ENCODE measurements at regions of chr1 and their contacts with region 1.

Region 1: DNA sequence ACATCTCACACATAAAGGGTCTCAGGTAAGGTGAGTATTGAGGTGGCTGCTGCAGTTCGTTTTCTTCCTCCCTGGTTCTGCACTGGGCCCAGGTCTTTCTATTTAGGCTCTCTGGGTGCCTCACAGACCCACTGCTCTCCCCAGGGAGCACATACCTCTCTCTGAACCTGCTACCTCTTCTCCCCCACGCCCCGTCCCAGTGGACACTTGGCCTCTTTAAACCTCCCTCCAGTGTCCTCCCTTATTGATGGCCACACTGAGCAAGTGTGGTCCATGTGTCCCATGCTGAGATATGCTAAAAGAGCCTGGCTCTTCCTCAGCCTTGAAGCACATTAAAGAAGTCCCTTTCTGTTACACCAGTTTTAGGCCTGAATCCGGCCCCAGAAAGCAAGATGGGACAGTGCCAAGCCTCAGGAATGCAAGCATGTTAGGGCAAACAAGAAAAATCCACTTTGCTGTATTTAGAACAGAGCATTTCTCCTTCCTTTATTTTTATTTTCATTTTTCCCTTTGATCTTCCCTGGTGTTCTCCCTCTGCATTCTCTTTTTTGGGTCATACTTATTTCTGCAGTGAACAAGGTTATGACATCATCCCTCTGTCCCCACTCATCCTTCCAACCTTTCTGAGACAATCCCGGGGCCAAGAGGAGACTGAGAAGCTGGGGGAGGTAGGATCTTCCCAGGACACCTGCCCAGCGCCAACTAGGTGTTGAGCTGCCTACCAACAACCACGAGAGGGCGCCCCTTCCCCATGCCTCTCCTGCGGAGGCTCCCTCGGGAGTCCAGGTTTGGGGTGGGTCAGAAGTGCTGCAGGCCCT is 5.0 kb upstream of the CHI3L2 start:
- DNase-seq: peak; percentile 81
- ATAC-seq: peak; percentile 57
- H3K4me3 ChIP-seq: peak overlapping the region; percentile 23; the same call in 1 of the 2 replicates
- H3K27ac ChIP-seq: peak overlapping the region; percentile 100
- H3K4me1 ChIP-seq: peaks cover 88% of the 10 kb centered on the region
- H3K27me3 ChIP-seq: no peaks in the 10 kb centered on the region
- CTCF ChIP-seq: peak; percentile 96 to 97 (median 96); a peak in 5 of 6 replicates
- EP300 ChIP-seq: no peak
- POLR2A ChIP-seq: no peak
- RAD21 ChIP-seq: peak; percentile 99

Region 2: GRCh38 chr1:110787328-110788071 is 435.0 kb before region 1 on chr1:
- CTCF ChIA-PET with region 1: no interaction called
- POLR2A ChIA-PET with region 1: no interaction called
- RAD21 ChIA-PET with region 1: no interaction called
- SMC1A ChIA-PET with region 1: interaction called, 3 read pairs
- in situ Hi-C with region 1: no loop called
- intact Hi-C with region 1: loop called (anchors 1 kb)
- DNase-seq: peak; percentile 76
- ATAC-seq: peak; percentile 83
- H3K4me3 ChIP-seq: no peak overlapping the region
- H3K27ac ChIP-seq: peak overlapping the region; percentile 98
- H3K4me1 ChIP-seq: peaks cover 29% of the 10 kb centered on the region
- H3K27me3 ChIP-seq: no peaks in the 10 kb centered on the region
- CTCF ChIP-seq: no peak
- EP300 ChIP-seq: no peak
- POLR2A ChIP-seq: no peak
- RAD21 ChIP-seq: no peak

Region 3: DNA sequence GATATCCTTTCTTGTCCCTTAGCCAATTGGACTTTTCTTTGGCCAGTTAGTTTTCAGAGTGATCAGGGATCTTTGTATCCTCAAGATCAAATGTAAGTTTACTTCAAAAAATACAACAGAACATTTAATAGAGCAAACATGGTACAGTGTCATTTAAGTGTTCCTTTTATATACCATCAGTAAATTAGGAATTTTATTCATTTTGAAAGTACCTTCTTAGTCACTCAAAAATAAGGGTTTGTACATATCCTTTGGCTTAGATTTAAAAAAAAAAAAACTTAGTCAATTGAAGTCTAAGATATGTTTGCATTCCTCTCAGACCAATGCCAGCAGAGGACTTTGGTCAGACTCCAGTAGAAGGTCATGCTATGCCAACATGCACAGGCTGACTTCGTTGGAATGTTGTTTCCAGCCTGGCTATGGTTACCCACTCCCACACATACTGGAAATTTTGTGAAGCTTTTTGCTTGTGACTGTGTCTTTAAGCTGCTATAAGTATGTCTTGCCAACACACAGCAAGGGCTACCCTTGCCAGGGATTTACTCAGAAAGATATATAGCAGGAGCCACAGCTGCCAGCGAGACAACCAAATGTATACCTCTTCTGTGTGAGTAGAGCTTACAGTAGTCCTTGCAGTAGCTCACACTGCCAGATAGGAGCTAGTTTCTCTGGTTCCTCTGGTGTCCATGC is 177.3 kb before region 1 on chr1:
- CTCF ChIA-PET with region 1: no interaction called
- POLR2A ChIA-PET with region 1: no interaction called
- RAD21 ChIA-PET with region 1: interaction called, 12 read pairs
- SMC1A ChIA-PET with region 1: interaction called, 4 read pairs
- in situ Hi-C with region 1: no loop called
- intact Hi-C with region 1: no loop called
- DNase-seq: no peak
- ATAC-seq: peak; percentile 72
- H3K4me3 ChIP-seq: no peak overlapping the region
- H3K27ac ChIP-seq: no peak overlapping the region
- H3K4me1 ChIP-seq: peaks cover 5% of the 10 kb centered on the region
- H3K27me3 ChIP-seq: no peaks in the 10 kb centered on the region
- CTCF ChIP-seq: no peak
- EP300 ChIP-seq: no peak
- POLR2A ChIP-seq: no peak
- RAD21 ChIP-seq: no peak

Region 4: DNA sequence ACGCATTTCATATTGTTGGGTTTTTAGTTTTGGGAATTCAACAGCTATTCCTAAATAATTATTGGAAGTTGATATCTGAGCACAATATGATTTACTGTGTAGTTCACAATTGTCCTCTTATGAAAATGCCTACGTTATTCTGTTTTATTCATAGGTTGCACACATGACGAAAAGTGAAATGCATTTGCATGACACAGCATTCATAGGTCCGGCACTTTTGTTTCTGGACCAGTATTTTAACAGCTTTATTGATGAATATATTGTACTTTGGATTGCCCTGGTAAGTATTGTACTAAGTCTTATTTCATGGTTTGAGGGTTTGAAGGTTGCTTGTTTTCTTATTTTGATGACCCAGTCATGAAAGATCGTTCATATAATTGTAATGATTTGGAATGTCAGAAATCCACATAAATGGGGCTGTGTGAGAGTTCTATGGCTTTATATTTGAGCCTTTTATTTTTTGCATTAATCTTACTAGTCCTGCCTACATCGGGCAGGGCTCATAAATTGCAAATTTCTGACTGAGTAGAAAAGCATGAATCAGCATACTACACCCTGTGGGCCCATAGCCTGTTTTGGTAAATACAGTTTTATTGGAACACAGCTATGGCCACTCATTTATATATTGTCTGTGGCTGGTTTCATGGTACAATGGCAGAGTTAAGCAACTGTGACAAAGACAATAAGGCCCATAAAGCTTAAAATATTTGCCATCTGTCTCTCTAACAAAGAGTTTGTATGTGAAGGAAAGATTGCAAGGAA is 39.0 kb before region 1 on chr1:
- CTCF ChIA-PET with region 1: interaction called, 3 read pairs
- POLR2A ChIA-PET with region 1: interaction called, 4 read pairs
- RAD21 ChIA-PET with region 1: interaction called, 12 read pairs
- SMC1A ChIA-PET with region 1: interaction called, 16 read pairs
- in situ Hi-C with region 1: no loop called
- intact Hi-C with region 1: loop called (anchors 5 kb)
- DNase-seq: no peak
- ATAC-seq: 0 out of 3 replicates have a peak, but pooled peaks have one; percentile 17
- H3K4me3 ChIP-seq: no peak overlapping the region
- H3K27ac ChIP-seq: no peak overlapping the region
- H3K4me1 ChIP-seq: no peaks in the 10 kb centered on the region
- H3K27me3 ChIP-seq: no peaks in the 10 kb centered on the region
- CTCF ChIP-seq: no peak
- EP300 ChIP-seq: no peak
- POLR2A ChIP-seq: no peak
- RAD21 ChIP-seq: no peak

Region 5: GRCh38 chr1:111334169-111334568 is 111.7 kb after region 1 on chr1:
- CTCF ChIA-PET with region 1: interaction called, 84 read pairs
- POLR2A ChIA-PET with region 1: interaction called, 4 read pairs
- RAD21 ChIA-PET with region 1: interaction called, 24 read pairs
- SMC1A ChIA-PET with region 1: interaction called, 49 read pairs
- in situ Hi-C with region 1: loop called (anchors 5 kb)
- intact Hi-C with region 1: loop called (anchors 1 kb)
- DNase-seq: peak; percentile 33
- ATAC-seq: peak; percentile 85
- H3K4me3 ChIP-seq: no peak overlapping the region
- H3K27ac ChIP-seq: no peak overlapping the region
- H3K4me1 ChIP-seq: peaks cover 17% of the 10 kb centered on the region
- H3K27me3 ChIP-seq: no peaks in the 10 kb centered on the region
- CTCF ChIP-seq: peak; percentile 61 to 75 (median 73); a peak in 5 of 6 replicates
- EP300 ChIP-seq: no peak
- POLR2A ChIP-seq: no peak
- RAD21 ChIP-seq: peak; percentile 95

Region 6: GRCh38 chr1:111592389-111593361 is 370.2 kb after region 1 on chr1:
- CTCF ChIA-PET with region 1: interaction called, 4 read pairs
- POLR2A ChIA-PET with region 1: interaction called, 5 read pairs
- RAD21 ChIA-PET with region 1: interaction called, 28 read pairs
- SMC1A ChIA-PET with region 1: interaction called, 22 read pairs
- in situ Hi-C with region 1: loop called (anchors 5 kb)
- intact Hi-C with region 1: no loop called
- DNase-seq: peak; percentile 98
- ATAC-seq: peak; percentile 92
- H3K4me3 ChIP-seq: peak overlapping the region; percentile 54
- H3K27ac ChIP-seq: peak overlapping the region; percentile 83
- H3K4me1 ChIP-seq: peaks cover 79% of the 10 kb centered on the region
- H3K27me3 ChIP-seq: no peaks in the 10 kb centered on the region
- CTCF ChIP-seq: no peak
- EP300 ChIP-seq: peak; percentile 78 to 93
- POLR2A ChIP-seq: peak; percentile 58; the same call in 1 of the 2 replicates
- RAD21 ChIP-seq: peak; percentile 39

Measured in GM12878 (cell line).